Ovary (tissue), 10 donors: ENCODE measurements at regions of chr15 and their contacts with region 1.

Region 1: GRCh38 chr15:75367913-75368688 is at the start of gene MAN2C1:
- DNase-seq: peak; percentile 93 to 94 (median 94)
- H3K4me3 ChIP-seq: peak within 1 kb of the TSS; percentile 97
- H3K27ac ChIP-seq: peak within 1 kb of the TSS; percentile 63 to 93
- H3K4me1 ChIP-seq: peaks cover 12% of the 10 kb centered on the region
- H3K27me3 ChIP-seq: no peaks in the 10 kb centered on the region
- CTCF ChIP-seq: peak; percentile 47 to 83 (median 69)
- EP300 ChIP-seq: no peak
- POLR2A ChIP-seq: peak; percentile 68
- total RNA-seq, gene MAN2C1: 166 to 277 (median 223) TPM

Region 2: DNA sequence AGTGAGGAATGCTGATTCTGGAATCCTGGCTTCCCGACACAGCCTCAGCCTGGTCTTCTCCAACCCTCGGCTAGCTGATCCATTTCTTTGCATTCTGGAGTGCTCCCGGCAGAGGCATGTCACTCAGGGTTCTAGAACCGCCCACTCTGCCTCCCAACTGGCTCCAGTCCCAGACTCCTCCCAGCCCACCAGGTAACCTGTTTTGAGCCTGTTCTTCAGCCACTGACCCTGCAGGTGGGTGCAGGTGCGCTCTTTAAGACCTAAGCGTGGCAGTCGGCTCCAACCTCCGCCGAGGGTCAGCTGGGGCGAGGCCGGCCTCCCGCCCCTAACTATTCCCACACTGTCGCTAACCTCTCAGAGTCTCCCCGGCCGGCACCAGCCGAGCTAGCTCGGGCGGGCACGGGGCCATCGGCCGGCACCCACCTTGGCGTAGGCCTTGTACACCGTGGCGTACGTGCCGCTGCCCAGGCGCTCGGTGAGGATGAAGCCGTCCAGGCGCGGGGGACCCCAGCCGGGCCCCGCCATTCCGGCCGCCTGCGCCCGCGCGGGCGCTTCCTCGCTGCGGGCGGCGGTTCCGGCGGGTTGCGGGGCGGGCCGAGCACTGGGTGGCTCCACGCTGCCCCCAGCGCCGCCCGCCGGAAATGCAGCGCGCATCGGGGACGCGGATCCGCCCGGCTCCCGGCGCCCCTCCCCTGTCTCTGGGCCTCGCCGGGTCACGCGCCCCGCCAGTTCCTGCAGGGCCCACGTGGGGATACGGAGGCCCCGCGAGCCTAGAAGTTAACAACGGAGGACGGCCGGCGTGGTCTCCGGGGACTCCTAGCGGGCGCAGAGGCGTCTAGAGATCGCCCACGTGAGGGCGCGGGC is 525.3 kb before region 1 on chr15 and contains the start of gene ULK3:
- intact Hi-C with region 1: no loop called
- DNase-seq: peak; percentile 91 to 95 (median 92)
- H3K4me3 ChIP-seq: peak within 1 kb of the TSS; percentile 57
- H3K27ac ChIP-seq: peak within 1 kb of the TSS; percentile 69 to 90
- H3K4me1 ChIP-seq: peaks cover 4% of the 10 kb centered on the region
- H3K27me3 ChIP-seq: no peaks in the 10 kb centered on the region
- CTCF ChIP-seq: peak; percentile 60 to 97 (median 96)
- EP300 ChIP-seq: no peak
- POLR2A ChIP-seq: peak; percentile 10
- total RNA-seq, gene ULK3: 25.2 to 45.7 (median 27.8) TPM

Region 3: GRCh38 chr15:75043509-75044257 is 324.4 kb before region 1 on chr15:
- intact Hi-C with region 1: no loop called
- DNase-seq: peak; percentile 98 to 100 (median 99)
- H3K4me3 ChIP-seq: no peak overlapping the region
- H3K27ac ChIP-seq: peak overlapping the region; percentile 46 to 90
- H3K4me1 ChIP-seq: peaks cover 29% of the 10 kb centered on the region
- H3K27me3 ChIP-seq: no peaks in the 10 kb centered on the region
- CTCF ChIP-seq: peak; percentile 45 to 87 (median 74)
- EP300 ChIP-seq: peak; percentile 40
- POLR2A ChIP-seq: peak; percentile 30

Region 4: GRCh38 chr15:75352186-75352585 is 15.9 kb before region 1 on chr15:
- intact Hi-C with region 1: loop called in 1 of 4 experiments (anchors 1 kb)
- DNase-seq: peak in 2 of 5 donors; percentile 13 to 15
- H3K4me3 ChIP-seq: no peak overlapping the region
- H3K27ac ChIP-seq: no peak overlapping the region
- H3K4me1 ChIP-seq: peaks cover 7% of the 10 kb centered on the region
- H3K27me3 ChIP-seq: no peaks in the 10 kb centered on the region
- CTCF ChIP-seq: no peak
- EP300 ChIP-seq: no peak
- POLR2A ChIP-seq: no peak

Region 5: DNA sequence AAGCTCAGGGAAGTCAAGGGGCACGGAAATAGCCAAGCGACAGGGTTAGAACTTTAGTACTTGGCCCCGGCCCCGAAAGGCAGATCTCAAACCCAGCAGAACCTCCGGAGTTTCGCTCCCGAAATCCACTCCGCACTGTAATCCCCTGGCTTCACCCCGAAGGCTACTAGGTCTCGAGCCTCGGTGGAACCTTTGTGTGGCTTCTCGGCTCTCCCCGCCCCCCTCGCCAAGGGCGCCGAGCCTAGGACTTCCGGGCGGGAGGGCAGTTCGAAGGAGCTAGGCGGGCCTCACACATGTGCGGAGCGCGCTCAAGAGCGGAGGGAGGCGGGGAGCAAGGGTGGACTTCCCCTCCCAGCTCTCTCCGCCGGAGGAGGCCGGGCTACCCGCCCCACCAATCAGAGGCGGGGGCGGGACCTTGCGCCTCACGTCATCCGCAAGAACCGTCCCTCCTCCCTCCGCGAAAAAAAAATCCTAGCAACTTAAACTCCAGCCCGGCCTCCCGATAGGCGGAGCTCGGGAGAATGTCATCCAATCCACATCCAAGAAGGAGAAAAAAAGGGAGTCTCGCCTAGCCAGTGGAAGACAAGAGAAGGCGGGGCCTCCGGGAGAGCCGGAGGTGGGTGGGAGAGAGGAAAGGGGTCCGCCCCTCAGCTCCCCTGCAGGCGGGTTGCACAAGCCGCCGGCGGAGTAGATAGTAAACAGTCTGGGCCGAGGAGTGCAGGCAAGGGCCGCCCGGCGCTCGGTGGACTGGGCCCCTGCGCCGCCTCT is 85.8 kb after region 1 on chr15:
- intact Hi-C with region 1: loop called in 1 of 4 experiments (anchors 5 kb)
- DNase-seq: peak; percentile 97 to 99 (median 98)
- H3K4me3 ChIP-seq: peak overlapping the region; percentile 76
- H3K27ac ChIP-seq: peak overlapping the region; percentile 81 to 89
- H3K4me1 ChIP-seq: no peaks in the 10 kb centered on the region
- H3K27me3 ChIP-seq: no peaks in the 10 kb centered on the region
- CTCF ChIP-seq: no peak
- EP300 ChIP-seq: peak; percentile 31
- POLR2A ChIP-seq: peak; percentile 81

Region 6: DNA sequence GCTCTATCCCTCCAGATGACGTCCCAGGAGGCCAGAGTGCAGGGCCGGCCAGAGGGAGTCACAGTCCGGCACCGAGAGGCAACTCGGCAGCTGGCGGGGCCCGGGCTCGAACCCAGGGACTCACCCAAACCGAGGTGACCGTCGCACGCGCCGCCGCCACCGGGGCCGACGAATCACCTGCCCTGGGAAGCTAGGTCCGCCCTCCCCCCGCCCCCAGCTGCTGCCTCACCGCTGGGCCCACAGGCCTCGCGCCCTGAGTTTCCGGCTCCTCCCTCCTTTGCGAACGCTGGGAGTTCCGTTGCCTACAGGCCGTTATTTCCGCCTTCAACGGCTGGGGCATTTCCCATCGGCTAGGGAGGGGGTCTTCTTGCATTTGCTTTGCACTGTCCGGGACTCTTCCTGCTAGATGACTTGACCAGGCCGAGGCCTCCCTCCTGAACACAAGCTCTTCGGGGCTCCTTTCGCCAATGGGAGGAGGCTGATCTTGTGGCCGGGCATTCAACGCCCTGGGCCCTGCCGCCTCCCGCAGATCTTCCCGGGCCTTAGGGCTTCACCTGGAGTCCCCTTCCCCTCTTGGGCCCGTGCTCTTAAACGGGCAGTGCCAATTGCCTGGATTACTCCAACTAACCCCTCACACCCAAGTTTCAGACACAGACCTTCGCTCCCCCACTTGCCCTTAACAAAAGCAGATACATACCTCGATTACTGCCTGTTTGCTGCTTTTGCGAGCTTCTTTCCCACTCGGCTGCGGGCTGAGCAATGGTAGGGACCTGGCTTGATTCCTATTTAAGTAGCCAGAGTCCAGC is 257.6 kb after region 1 on chr15 and contains the start of gene SNUPN:
- intact Hi-C with region 1: loop called in 2 of 4 experiments (anchors 5 to 10 kb)
- DNase-seq: peak; percentile 92 to 95 (median 93)
- H3K4me3 ChIP-seq: peak within 1 kb of the TSS; percentile 88
- H3K27ac ChIP-seq: peak within 1 kb of the TSS; percentile 75 to 94
- H3K4me1 ChIP-seq: peaks cover 7% of the 10 kb centered on the region
- H3K27me3 ChIP-seq: no peaks in the 10 kb centered on the region
- CTCF ChIP-seq: no peak
- EP300 ChIP-seq: peak; percentile 20
- POLR2A ChIP-seq: peak; percentile 42
- total RNA-seq, gene SNUPN: 20.4 to 34.5 (median 27.5) TPM

Region 7: DNA sequence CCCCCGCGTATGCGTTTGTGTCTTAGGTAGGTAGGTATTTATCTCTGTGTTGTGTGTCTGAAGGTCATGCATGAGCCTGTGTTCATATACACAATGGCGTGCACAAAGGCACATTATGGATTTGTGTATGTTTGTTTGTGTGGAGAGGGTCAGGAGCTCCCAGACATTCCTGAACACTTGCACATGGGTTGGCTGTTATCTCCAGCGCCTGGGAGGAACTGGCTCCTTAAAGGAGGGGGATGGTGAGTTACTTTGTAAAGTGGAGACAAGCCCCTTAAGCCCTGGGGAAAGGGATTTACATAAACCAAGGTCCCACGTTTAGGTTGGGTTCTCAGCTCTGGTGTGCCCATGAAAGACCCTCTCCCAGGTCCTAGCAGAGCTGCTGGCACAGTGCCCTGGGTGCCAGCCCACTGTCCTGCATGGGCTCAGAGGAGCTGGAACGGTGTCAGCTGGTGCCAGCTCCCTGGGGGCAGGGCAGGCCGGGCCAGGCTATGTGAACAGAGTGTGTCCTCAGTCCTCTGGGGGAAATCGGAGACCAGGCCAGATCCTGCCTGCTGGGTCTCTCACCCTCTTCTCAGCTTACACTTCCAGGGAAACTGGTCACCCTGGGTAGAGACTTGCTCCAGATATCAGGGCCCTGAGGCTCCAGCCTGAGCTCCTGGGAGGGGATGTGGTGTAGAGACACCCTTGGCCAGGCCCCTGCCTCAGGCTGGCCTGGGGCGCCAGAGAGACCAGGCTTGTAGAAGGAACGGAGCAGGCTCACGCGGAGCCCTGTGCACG is 304.7 kb after region 1 on chr15:
- intact Hi-C with region 1: loop called in 1 of 4 experiments (anchors 10 kb)
- DNase-seq: peak in 3 of 5 donors; percentile 61 to 63 (median 62)
- H3K4me3 ChIP-seq: no peak overlapping the region
- H3K27ac ChIP-seq: peak overlapping the region; percentile 19 to 72
- H3K4me1 ChIP-seq: peaks cover 17% of the 10 kb centered on the region
- H3K27me3 ChIP-seq: no peaks in the 10 kb centered on the region
- CTCF ChIP-seq: no peak
- EP300 ChIP-seq: no peak
- POLR2A ChIP-seq: no peak

Region 8: GRCh38 chr15:75694241-75695182 is 326.4 kb after region 1 on chr15:
- intact Hi-C with region 1: loop called in 1 of 4 experiments (anchors 10 kb)
- DNase-seq: peak; percentile 86 to 91 (median 88)
- H3K4me3 ChIP-seq: no peak overlapping the region
- H3K27ac ChIP-seq: peak overlapping the region in 1 of 2 donors; percentile 61
- H3K4me1 ChIP-seq: peaks cover 15% of the 10 kb centered on the region
- H3K27me3 ChIP-seq: no peaks in the 10 kb centered on the region
- CTCF ChIP-seq: peak in 1 of 3 donors; percentile 20
- EP300 ChIP-seq: no peak
- POLR2A ChIP-seq: no peak